ENCODE measurements at regions of chr3 and their contacts with region 1.

Region 1: DNA sequence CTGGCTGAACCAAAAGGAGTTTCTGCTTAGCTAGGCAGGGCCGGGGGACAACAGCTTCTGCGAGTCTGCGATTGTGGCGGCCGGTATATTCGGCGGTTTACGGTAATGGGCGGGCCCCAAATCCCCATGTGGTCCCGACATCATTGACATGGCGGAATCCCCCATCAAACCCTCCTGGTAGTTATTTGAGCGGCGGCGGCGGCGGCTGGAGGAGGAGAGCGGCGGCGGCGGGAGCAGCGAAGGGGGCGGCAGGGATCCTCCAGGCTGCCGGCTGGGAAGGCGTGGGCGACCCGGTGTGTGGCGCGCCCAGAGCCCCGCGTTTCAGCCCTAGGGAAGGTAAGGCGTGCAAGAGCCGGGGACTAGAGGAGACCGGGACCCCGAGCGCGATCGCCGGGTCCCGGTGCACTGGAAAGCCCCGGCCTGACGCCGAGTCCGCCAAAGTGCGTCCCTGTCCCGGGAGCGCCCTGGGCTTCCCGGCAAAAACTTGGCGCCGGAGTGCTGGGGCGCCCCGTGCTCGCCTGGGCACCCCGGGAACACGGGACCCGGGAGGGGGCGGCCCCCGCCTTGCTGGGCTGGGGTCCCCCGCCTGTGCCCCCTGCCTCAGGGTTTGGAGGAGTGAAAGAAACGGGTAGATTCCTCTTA is at the start of gene FNDC3B:
- DNase-seq: peak; percentile 96
- H3K4me3 Mint-ChIP-seq: peak within 1 kb of the TSS; percentile 88
- H3K27ac Mint-ChIP-seq: peak within 1 kb of the TSS; percentile 89
- H3K4me1 Mint-ChIP-seq: peaks cover 29% of the 10 kb centered on the region
- H3K27me3 Mint-ChIP-seq: no peaks in the 10 kb centered on the region
- total RNA-seq, gene FNDC3B: 14.4 to 17.8 TPM

Region 2: DNA sequence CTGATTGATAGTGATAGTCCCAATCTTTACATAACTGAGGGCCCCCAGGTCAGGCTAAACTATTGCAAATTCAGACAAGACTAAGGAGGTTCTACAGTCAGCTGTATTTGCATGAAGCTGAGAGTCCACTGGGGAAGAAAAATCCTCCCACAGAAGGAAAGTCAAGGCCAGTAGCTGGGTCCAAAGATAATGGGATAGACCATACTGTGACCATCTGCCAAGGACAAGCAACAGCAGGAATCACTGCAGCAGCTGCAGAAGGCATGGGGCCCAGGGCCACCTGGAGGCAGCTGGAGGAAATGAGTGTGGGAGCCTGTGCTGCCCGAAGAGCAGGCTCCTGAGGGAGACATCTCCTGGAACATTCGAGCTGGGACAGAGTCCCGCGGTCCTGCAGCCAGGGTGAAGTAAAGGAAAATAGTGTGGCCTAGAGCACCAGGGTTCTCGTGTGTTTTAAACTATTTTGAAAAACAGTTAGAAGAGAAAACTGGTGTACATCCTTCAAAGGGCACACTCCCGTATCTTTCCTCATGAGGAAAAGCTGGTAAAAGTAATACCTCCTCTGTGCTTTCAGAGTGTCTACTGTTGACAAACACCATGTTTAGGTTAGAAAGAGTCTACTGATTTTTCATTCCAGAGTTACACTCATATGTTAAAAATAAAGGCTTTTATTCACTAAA is 209.6 kb before region 1 on chr3:
- CTCF ChIA-PET with region 1: no interaction called
- POLR2A ChIA-PET with region 1: no interaction called
- intact Hi-C with region 1: no loop called
- DNase-seq: peak; percentile 40
- H3K4me3 Mint-ChIP-seq: no peak overlapping the region
- H3K27ac Mint-ChIP-seq: no peak overlapping the region
- H3K4me1 Mint-ChIP-seq: peaks cover 9% of the 10 kb centered on the region
- H3K27me3 Mint-ChIP-seq: peaks cover 4% of the 10 kb centered on the region

Region 3: DNA sequence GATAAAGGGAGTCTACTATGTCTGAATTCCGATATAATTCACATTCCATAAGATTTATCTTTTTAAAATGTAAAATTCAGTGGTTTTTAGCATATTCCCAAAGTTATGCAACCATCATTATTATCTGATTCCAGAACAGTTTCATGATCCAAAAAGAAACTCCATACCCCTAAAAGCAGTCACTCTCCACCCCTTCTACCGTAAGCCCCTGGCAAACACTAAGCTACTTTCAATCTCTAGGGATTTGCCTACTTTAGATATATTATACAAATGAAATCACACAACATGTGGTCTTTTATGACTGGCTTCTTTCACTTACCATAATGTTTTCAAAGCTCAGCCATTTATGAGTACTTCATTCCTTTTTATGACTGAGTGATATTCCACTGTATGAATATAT is 130.8 kb before region 1 on chr3:
- CTCF ChIA-PET with region 1: no interaction called
- POLR2A ChIA-PET with region 1: no interaction called
- intact Hi-C with region 1: no loop called
- DNase-seq: no peak
- H3K4me3 Mint-ChIP-seq: no peak overlapping the region
- H3K27ac Mint-ChIP-seq: no peak overlapping the region
- H3K4me1 Mint-ChIP-seq: no peaks in the 10 kb centered on the region
- H3K27me3 Mint-ChIP-seq: no peaks in the 10 kb centered on the region

Region 4: DNA sequence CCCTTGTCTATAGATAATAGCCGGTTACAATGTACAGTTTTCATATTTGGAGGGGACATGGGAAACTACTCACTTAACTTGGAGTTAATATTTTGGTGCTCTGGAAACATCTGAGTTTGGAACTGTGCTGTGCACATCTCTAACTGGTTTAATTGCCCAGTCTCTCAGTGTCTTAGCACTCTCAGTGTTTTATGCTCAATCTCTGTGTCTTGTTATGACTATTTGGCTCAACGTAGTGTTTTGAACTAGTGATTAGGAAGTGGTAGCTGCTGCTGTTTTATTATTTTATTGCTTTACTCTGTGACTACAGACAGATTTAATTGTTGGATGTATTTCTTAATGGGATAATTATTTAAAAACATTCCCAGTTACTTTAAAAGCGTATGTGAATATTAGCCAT is 16.9 kb after region 1 on chr3:
- CTCF ChIA-PET with region 1: interaction called, 5 read pairs
- POLR2A ChIA-PET with region 1: interaction called, 10 read pairs
- intact Hi-C with region 1: no loop called
- DNase-seq: no peak
- H3K4me3 Mint-ChIP-seq: no peak overlapping the region
- H3K27ac Mint-ChIP-seq: no peak overlapping the region
- H3K4me1 Mint-ChIP-seq: peaks cover 22% of the 10 kb centered on the region
- H3K27me3 Mint-ChIP-seq: no peaks in the 10 kb centered on the region

Region 5: GRCh38 chr3:172106989-172107388 is 67.4 kb after region 1 on chr3:
- CTCF ChIA-PET with region 1: interaction called, 13 read pairs
- POLR2A ChIA-PET with region 1: interaction called, 5 read pairs
- intact Hi-C with region 1: loop called (anchors 1 kb)
- DNase-seq: peak; percentile 74
- H3K4me3 Mint-ChIP-seq: peak overlapping the region; percentile 59
- H3K27ac Mint-ChIP-seq: peak overlapping the region; percentile 89
- H3K4me1 Mint-ChIP-seq: peaks cover 72% of the 10 kb centered on the region
- H3K27me3 Mint-ChIP-seq: no peaks in the 10 kb centered on the region

Region 6: GRCh38 chr3:172270557-172271166 is 231.1 kb after region 1 on chr3:
- CTCF ChIA-PET with region 1: interaction called, 6 read pairs
- POLR2A ChIA-PET with region 1: no interaction called
- intact Hi-C with region 1: loop called (anchors 10 kb)
- DNase-seq: no peak
- H3K4me3 Mint-ChIP-seq: no peak overlapping the region
- H3K27ac Mint-ChIP-seq: no peak overlapping the region
- H3K4me1 Mint-ChIP-seq: no peaks in the 10 kb centered on the region
- H3K27me3 Mint-ChIP-seq: no peaks in the 10 kb centered on the region

Region 7: DNA sequence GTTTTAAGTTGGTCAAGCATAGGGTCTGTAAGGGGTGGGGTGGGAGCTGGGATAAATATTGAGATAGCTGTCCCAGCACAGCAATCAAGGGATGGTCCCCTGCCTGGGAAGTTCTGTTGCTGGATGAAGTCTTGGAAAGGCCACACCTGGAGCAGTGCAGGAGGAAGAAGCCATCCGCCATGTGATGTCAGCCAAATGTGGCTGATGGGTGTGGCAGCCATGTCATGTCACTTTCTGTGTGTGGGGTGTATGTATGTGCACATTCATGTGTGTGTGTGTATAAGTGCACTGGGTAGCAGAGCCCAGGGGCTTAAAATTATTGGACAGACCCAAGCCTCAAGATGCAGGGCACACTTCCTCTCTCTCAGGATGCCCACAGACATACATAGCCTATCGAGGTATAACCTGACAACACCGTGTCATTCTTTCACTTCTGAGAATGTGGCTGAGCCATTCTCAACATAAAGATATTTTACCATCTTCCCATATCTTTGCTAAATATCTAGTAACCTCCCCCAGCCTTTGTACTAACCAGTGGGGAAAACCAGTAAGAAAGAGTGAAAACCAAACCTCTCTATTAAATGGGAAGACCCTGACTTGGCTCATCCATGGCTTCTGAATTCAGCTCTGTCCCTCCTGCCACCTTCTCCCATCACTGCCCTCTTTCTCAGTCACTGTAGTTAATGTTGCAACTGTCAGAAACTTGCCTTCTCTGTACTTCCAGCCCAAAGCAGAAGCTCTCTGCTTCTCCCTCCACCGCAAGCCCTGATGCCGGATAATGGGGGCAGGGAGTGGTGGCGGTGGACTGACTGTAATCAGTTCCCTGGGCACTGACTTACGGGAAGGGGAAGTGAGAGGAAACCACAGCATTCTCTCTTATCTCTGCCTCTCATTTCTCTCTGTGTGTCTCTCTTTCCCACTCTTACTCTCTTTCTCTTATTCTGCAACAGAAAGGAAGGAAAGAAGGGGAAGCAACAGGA is 472.5 kb after region 1 on chr3:
- CTCF ChIA-PET with region 1: no interaction called
- POLR2A ChIA-PET with region 1: no interaction called
- intact Hi-C with region 1: loop called (anchors 5 kb)
- DNase-seq: peak; percentile 89
- H3K4me3 Mint-ChIP-seq: peak overlapping the region; percentile 52
- H3K27ac Mint-ChIP-seq: peak overlapping the region; percentile 93
- H3K4me1 Mint-ChIP-seq: peaks cover 81% of the 10 kb centered on the region
- H3K27me3 Mint-ChIP-seq: no peaks in the 10 kb centered on the region

Region 8: GRCh38 chr3:172750368-172751174 is 711.0 kb after region 1 on chr3 and contains the start of gene ECT2:
- CTCF ChIA-PET with region 1: no interaction called
- POLR2A ChIA-PET with region 1: no interaction called
- intact Hi-C with region 1: loop called (anchors 5 kb)
- DNase-seq: peak; percentile 99
- H3K4me3 Mint-ChIP-seq: peak within 1 kb of the TSS; percentile 87
- H3K27ac Mint-ChIP-seq: peak within 1 kb of the TSS; percentile 87
- H3K4me1 Mint-ChIP-seq: peaks cover 22% of the 10 kb centered on the region
- H3K27me3 Mint-ChIP-seq: peaks cover 1% of the 10 kb centered on the region
- total RNA-seq, gene ECT2: 48.2 to 52.8 TPM